Activated CD4-positive, alpha-beta T cell treated with anti-CD3 and anti-CD28 coated beads, Interleukin-2, amount 10 ng/mL, durations not matched to agents 24 days and 14 days (primary cell): ENCODE measurements at regions of chr2 and their contacts with region 1.

Region 1: DNA sequence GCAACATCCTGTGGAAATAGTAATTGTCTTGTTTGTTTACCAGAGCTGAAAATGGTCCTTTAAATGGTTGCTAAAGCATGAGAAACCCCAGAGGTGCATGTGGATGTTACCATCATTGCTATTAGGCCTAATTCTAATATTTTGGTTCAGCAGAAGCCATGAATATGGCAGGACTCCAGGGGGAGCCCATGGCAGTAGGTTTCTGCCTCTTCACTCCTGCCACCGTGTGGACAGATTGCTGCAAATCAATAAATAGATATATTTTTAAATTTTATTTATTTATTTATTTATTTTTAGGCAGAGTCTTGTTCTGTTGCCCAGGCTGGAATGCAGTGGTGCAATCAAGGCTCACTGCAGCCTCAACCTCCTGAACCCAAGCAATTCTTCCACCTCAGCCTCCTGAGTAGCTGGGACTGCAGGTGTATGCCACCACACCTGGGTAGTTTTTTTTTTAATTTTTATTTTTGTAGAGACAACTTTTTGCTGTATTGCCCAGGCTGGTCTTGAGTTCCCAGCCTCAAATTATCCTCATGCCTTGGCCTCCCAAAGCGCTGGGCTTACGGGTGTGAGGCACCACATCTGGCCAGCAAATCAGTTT is 54.9 kb upstream of the CAPN13 start:
- DNase-seq: peak; percentile 76
- H3K4me3 Mint-ChIP-seq: no peak overlapping the region
- H3K27ac Mint-ChIP-seq: no peak overlapping the region
- H3K4me1 Mint-ChIP-seq: peaks cover 6% of the 10 kb centered on the region
- H3K27me3 Mint-ChIP-seq: peaks cover 5% of the 10 kb centered on the region

Region 2: DNA sequence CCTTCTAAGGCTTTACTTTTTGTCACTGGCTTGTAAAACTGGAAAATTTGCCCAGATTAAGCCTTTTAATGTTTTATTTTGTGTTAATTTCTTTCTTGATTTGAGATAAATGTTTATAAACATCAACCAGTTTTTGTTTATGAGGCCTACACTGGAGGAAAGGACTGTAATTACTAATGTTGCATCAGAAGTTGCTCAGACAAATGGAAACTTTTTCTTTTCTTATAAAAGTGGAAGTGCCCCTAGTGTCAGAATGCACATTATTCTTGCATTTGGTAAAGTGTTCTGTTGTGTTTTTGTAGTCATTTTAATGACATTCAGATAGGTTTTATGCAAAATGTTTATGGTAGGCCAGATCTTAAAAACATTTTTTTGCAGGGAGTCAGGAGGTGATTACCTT is 389.8 kb before region 1 on chr2:
- intact Hi-C with region 1: no loop called
- DNase-seq: no peak
- H3K4me3 Mint-ChIP-seq: no peak overlapping the region
- H3K27ac Mint-ChIP-seq: peak overlapping the region; percentile 14
- H3K4me1 Mint-ChIP-seq: peaks cover 18% of the 10 kb centered on the region
- H3K27me3 Mint-ChIP-seq: no peaks in the 10 kb centered on the region

Region 3: DNA sequence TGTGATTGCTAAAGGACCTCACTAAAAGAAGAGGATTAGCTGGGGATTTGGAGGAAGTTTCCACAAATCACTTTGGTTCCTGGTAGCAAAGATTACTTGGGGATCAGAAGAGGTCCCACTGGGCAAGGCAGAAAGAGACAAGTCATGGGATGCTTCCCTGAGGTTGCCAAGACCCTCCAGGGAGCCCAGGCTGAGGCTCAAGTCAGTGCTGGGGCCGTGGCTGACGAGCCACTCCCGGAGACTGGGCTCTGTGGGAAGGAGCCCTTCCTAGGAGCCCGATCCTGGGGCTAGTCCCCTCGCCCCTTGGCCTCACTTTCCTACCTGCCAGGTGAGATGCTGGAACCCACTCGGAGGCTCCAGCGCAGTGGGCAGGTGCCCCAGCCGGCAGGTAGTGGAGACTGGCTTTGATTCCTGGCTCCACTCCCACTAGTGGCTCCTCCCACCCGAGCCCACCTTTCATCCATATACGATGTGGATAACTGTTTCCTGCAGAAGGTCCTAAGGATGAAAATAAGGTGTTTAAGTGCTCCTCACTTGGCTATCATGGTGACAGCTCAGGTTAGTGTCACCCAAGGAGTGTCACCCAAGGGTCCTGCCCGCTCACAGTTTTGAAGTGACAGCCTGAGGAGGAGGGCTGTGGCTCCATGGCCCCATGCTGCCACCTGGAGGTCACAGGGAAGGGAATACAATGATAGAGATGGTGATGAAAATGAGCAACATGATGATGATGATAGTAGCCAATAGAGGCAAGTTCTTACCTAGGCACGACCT is 155.4 kb before region 1 on chr2:
- intact Hi-C with region 1: no loop called
- DNase-seq: peak; percentile 89
- H3K4me3 Mint-ChIP-seq: no peak overlapping the region
- H3K27ac Mint-ChIP-seq: no peak overlapping the region
- H3K4me1 Mint-ChIP-seq: peaks cover 2% of the 10 kb centered on the region
- H3K27me3 Mint-ChIP-seq: peaks cover 4% of the 10 kb centered on the region

Region 4: GRCh38 chr2:31170071-31170698 is 308.0 kb after region 1 on chr2:
- intact Hi-C with region 1: loop called (anchors 5 kb)
- DNase-seq: peak; percentile 85
- H3K4me3 Mint-ChIP-seq: no peak overlapping the region
- H3K27ac Mint-ChIP-seq: no peak overlapping the region
- H3K4me1 Mint-ChIP-seq: peaks cover under 1% of the 10 kb centered on the region
- H3K27me3 Mint-ChIP-seq: peaks cover 2% of the 10 kb centered on the region

Region 5: DNA sequence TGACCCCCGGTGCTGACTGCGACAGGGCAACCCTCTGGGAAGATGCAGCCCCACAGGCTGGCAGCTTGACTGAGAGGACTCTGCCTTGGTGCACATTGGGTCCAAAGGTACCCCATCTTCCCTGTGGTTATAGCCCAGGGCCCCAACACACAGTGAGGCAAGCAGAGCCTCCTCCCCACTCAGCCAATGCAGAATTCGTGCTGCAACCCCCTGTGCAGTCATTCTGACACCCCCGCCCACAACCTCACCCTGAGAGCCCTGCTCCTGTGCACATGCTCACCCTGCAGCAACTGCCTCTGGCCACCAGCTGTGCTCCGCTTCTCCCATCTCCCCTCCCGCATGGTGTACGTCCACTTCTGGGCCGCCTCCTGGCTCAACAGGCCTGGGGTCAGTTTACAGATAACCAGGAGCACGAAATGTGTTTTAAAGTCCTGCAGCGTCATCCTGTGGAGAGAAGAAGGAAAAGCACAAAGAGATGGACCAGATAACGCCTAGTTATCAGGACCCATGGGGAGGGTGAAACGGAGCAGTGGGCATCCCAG is 330.8 kb after region 1 on chr2:
- intact Hi-C with region 1: no loop called
- DNase-seq: no peak
- H3K4me3 Mint-ChIP-seq: no peak overlapping the region
- H3K27ac Mint-ChIP-seq: no peak overlapping the region
- H3K4me1 Mint-ChIP-seq: no peaks in the 10 kb centered on the region
- H3K27me3 Mint-ChIP-seq: no peaks in the 10 kb centered on the region

Region 6: DNA sequence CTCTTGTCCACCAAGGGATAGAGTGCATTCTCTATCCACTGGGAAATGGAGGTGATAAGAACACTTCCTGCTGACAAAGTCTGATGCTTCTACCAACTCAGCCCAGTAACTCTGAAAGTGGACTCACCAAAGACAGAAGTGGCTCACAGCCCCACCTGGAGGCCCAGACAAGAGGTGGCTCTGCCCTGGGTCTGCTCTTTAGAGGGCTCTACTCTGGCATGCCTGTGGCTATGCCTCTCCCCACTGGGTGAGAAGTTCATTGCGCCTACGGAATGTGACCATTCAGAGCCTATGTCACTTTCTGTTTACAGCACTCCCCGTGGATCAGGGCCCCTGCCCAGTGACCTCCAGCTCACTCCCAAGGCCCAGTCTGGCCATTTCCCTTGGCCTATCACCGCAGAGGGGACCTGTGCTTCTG is 565.9 kb after region 1 on chr2:
- intact Hi-C with region 1: no loop called
- DNase-seq: no peak
- H3K4me3 Mint-ChIP-seq: no peak overlapping the region
- H3K27ac Mint-ChIP-seq: no peak overlapping the region
- H3K4me1 Mint-ChIP-seq: peaks cover 7% of the 10 kb centered on the region
- H3K27me3 Mint-ChIP-seq: peaks cover 4% of the 10 kb centered on the region